ENCODE measurements at regions of chr5 and their contacts with region 1.

Region 1: DNA sequence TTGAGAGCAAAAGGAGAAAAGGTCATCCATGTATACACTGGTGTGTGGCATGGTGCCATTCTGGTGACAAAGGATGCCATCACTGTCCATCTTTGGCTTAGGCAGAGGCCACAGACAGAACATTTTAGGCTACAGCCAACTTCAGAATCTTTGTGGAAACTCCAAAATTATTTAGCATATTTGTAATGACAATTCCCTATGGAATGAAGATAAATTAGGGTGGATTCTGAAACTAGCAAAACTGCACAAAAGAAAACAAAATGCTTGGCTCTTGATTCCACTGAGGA is 92.5 kb downstream of the FBXW11 start:
- DNase-seq: no peak
- ATAC-seq: no peak
- H3K4me3 ChIP-seq: no peak overlapping the region
- H3K27ac ChIP-seq: no peak overlapping the region
- H3K4me1 ChIP-seq: peaks cover 0 to 29% of the 10 kb centered on the region in 2 donors
- H3K27me3 ChIP-seq: no peaks in the 10 kb centered on the region
- CTCF ChIP-seq: no peak

Region 2: DNA sequence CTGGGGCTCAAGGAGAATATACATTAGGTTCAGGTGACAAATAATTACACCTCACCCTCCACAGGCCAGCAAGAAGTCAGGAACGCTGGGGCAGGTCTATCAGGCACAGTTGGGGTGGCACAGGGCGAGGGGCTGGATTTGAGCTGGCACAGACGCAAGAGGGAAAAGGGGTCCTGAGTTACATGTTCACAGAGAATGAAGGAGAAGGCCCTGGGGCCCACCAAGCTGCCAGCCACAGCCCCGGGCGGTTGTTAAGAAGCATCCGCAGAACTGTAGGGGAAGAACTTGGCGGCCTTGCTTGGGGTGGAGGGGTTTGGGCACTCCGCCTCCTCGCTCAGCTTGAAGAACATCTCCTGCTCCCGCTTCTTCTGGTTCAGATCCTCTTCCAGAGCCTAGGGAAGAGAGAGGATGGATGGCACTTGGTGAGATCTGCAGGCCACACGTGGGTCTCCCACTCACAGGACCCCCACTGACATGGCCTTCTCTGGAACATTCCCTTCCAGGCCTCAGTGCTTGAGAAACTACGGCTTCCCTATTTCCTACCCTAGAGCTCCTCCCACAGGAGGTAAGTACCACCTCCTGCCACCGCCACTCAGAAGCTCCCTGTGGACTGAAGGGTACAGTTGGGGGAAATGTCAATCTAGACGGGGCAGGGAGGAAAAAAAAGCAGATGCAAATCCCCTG is 130.8 kb after region 1 on chr5:
- intact Hi-C with region 1: loop called in 1 of 2 experiments (anchors 10 kb)
- DNase-seq: no peak
- ATAC-seq: no peak
- H3K4me3 ChIP-seq: no peak overlapping the region
- H3K27ac ChIP-seq: no peak overlapping the region
- H3K4me1 ChIP-seq: peaks cover 0 to 8% of the 10 kb centered on the region in 2 donors
- H3K27me3 ChIP-seq: no peaks in the 10 kb centered on the region
- CTCF ChIP-seq: no peak

Region 3: DNA sequence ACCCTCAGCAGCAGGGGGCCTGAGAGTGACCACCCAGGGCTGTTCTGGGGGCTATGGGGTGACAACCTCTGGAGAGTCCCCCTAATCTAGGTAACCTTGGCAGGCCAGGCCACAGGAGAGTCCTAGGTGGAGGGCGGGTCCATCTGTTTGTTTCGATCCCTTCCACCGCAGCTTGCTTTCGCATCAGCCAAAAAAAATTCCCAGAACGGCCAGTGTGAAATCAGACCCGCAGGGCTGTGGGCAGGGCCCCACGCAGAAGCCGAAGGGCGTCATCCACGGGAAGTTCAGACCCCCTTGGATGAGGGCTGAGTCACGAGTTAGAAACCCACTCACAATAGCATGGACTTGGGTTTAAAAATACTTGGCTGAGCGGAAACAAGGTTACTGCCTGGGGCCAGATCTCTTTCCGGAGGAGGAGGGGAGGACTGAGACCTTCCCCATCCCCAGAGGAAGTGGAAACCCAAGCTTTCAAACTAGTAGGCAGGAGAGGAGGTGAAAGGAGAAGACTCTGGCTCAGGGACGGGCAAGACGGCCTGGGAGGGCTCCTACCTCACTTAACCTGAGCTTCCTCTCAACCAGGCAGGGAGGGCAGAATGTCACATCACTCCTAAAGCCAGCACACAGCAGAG is 265.5 kb after region 1 on chr5:
- intact Hi-C with region 1: no loop called
- DNase-seq: no peak
- ATAC-seq: peak; percentile 32
- H3K4me3 ChIP-seq: peak overlapping the region in 1 of 2 donors; percentile 19
- H3K27ac ChIP-seq: peak overlapping the region; percentile 80 to 94
- H3K4me1 ChIP-seq: peaks cover 8 to 99% of the 10 kb centered on the region in 2 donors
- H3K27me3 ChIP-seq: no peaks in the 10 kb centered on the region
- CTCF ChIP-seq: no peak